ENCODE measurements at regions of chr15 and their contacts with region 1.

Region 1: GRCh38 chr15:40906091-40906990 is 12.1 kb downstream of the VPS18 start:
- DNase-seq: peak; percentile 59
- H3K4me3 Mint-ChIP-seq: peak overlapping the region; percentile 55
- H3K27ac Mint-ChIP-seq: no peak overlapping the region
- H3K4me1 Mint-ChIP-seq: peaks cover 7% of the 10 kb centered on the region
- H3K27me3 Mint-ChIP-seq: no peaks in the 10 kb centered on the region

Region 2: GRCh38 chr15:40941528-40942336 is 35.4 kb after region 1 on chr15:
- intact Hi-C with region 1: loop called (anchors 1 kb)
- DNase-seq: peak; percentile 63
- H3K4me3 Mint-ChIP-seq: peak overlapping the region; percentile 80
- H3K27ac Mint-ChIP-seq: peak overlapping the region; percentile 72
- H3K4me1 Mint-ChIP-seq: peaks cover 22% of the 10 kb centered on the region
- H3K27me3 Mint-ChIP-seq: no peaks in the 10 kb centered on the region

Region 3: GRCh38 chr15:40952901-40953712 is 46.8 kb after region 1 on chr15 and contains the start of gene CHAC1:
- intact Hi-C with region 1: loop called (anchors 2 kb)
- DNase-seq: peak; percentile 96
- H3K4me3 Mint-ChIP-seq: peak within 1 kb of the TSS; percentile 84
- H3K27ac Mint-ChIP-seq: peak within 1 kb of the TSS; percentile 87
- H3K4me1 Mint-ChIP-seq: peaks cover 29% of the 10 kb centered on the region
- H3K27me3 Mint-ChIP-seq: no peaks in the 10 kb centered on the region
- total RNA-seq, gene CHAC1: 3.6 and 4.5 TPM in 2 replicates

Region 4: DNA sequence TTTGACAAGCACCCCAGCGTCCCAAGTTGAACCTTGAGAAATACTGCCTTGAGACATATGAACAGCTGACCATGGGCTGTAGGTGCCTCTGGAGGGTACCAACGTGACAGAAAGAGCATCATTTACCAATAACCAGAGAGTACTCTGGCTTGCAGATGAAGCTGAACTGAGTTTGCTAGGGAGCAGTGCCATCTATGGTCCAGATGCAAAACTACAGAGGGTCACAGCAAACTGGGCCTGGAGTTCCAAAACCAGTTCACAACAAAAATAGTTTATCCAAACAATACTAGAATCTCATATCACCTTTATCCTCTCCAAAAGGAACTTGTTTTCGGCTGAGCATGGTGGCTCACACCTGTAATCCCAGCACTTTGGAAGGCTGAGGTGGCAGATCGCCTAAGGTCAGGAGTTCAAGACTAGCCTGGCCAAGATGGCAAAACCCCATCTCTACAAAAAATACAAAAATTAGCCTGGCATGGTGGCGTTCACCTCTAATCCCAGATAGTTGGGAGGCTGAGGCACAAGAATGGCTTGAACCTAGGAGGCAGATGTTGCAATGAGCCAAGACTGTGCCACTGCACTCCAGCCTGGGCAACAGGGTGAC is 116.2 kb after region 1 on chr15:
- intact Hi-C with region 1: loop called (anchors 1 kb)
- DNase-seq: peak; percentile 24
- H3K4me3 Mint-ChIP-seq: no peak overlapping the region
- H3K27ac Mint-ChIP-seq: no peak overlapping the region
- H3K4me1 Mint-ChIP-seq: peaks cover 2% of the 10 kb centered on the region
- H3K27me3 Mint-ChIP-seq: no peaks in the 10 kb centered on the region

Region 5: GRCh38 chr15:41116116-41116871 is 210.0 kb after region 1 on chr15 and contains the start of gene INO80:
- intact Hi-C with region 1: loop called (anchors 10 kb)
- DNase-seq: peak; percentile 96
- H3K4me3 Mint-ChIP-seq: peak within 1 kb of the TSS; percentile 97
- H3K27ac Mint-ChIP-seq: peak within 1 kb of the TSS; percentile 99
- H3K4me1 Mint-ChIP-seq: peaks cover 8% of the 10 kb centered on the region
- H3K27me3 Mint-ChIP-seq: no peaks in the 10 kb centered on the region
- total RNA-seq, gene INO80: 33.2 and 35.2 TPM in 2 replicates

Region 6: GRCh38 chr15:41180206-41180789 is 274.0 kb after region 1 on chr15:
- intact Hi-C with region 1: loop called (anchors 1 kb)
- DNase-seq: no peak
- H3K4me3 Mint-ChIP-seq: no peak overlapping the region
- H3K27ac Mint-ChIP-seq: no peak overlapping the region
- H3K4me1 Mint-ChIP-seq: peaks cover 1% of the 10 kb centered on the region
- H3K27me3 Mint-ChIP-seq: peaks cover 7% of the 10 kb centered on the region

Region 7: GRCh38 chr15:41230650-41231533 is 324.6 kb after region 1 on chr15 and contains the starts of genes CHP1 and EXD1:
- intact Hi-C with region 1: no loop called
- DNase-seq: peak; percentile 96
- H3K4me3 Mint-ChIP-seq: peak within 1 kb of the TSS; percentile 87
- H3K27ac Mint-ChIP-seq: peak within 1 kb of the TSS; percentile 85
- H3K4me1 Mint-ChIP-seq: peaks cover 24% of the 10 kb centered on the region
- H3K27me3 Mint-ChIP-seq: peaks cover 8% of the 10 kb centered on the region
- total RNA-seq, gene CHP1: 58.3 and 58.6 TPM in 2 replicates
- total RNA-seq, gene EXD1: not detected in 2 replicates

Region 8: GRCh38 chr15:41331833-41332787 is 425.8 kb after region 1 on chr15 and contains the start of gene OIP5:
- intact Hi-C with region 1: loop called (anchors 10 kb)
- DNase-seq: peak; percentile 99
- H3K4me3 Mint-ChIP-seq: peak within 1 kb of the TSS; percentile 94
- H3K27ac Mint-ChIP-seq: peak within 1 kb of the TSS; percentile 93
- H3K4me1 Mint-ChIP-seq: peaks cover 33% of the 10 kb centered on the region
- H3K27me3 Mint-ChIP-seq: no peaks in the 10 kb centered on the region
- total RNA-seq, gene OIP5: 13.7 and 16.1 TPM in 2 replicates

Measured in activated T-helper 2 cell treated with anti-CD3 and anti-CD28 coated beads, Interferon-gamma antibody, Interleukin-2, Interleukin-4, amounts not matched to agents 10 μg/mL and 5 μg/mL and 100 μg/mL, durations not matched to agents 14 hours and 24 hours and 36 hours (primary cell).